ENCODE measurements at regions of chrX and their contacts with region 1.

Region 1: DNA sequence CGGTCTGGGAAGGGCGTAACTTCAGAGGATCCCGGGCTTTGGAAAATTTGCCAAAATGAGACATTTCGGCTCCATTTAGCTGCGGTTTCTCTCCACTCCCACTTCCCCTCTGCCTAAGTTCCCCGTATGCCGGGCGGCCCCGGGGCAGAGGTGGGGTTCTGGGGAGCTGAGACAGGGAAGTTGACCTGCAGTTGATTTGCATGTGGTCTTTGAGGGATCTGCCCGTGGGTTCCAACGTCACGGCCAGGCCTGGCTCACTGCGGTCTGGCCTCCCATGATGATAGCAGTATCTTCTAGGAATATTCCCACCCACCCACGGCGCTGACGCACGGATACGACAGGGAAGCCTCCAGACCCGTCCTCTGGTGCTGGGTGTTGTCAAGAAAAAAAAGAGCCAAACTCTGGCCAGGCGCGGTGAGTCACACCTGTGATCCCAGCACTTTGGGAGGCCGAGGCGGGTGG is 27.3 kb upstream of the CRLF2 start:
- DNase-seq: peak; percentile 68
- ATAC-seq: peak; percentile 88
- H3K4me3 ChIP-seq: no peak overlapping the region
- H3K27ac ChIP-seq: peak overlapping the region; percentile 7; the same call in 1 of the 2 replicates
- H3K4me1 ChIP-seq: peaks cover 8% of the 10 kb centered on the region; the same call in 1 of the 2 replicates
- H3K27me3 ChIP-seq: no peaks in the 10 kb centered on the region
- CTCF ChIP-seq: no peak
- EP300 ChIP-seq: peak; percentile 67 to 82; a peak in 2 of 4 replicates
- POLR2A ChIP-seq: no peak
- RAD21 ChIP-seq: no peak

Region 2: DNA sequence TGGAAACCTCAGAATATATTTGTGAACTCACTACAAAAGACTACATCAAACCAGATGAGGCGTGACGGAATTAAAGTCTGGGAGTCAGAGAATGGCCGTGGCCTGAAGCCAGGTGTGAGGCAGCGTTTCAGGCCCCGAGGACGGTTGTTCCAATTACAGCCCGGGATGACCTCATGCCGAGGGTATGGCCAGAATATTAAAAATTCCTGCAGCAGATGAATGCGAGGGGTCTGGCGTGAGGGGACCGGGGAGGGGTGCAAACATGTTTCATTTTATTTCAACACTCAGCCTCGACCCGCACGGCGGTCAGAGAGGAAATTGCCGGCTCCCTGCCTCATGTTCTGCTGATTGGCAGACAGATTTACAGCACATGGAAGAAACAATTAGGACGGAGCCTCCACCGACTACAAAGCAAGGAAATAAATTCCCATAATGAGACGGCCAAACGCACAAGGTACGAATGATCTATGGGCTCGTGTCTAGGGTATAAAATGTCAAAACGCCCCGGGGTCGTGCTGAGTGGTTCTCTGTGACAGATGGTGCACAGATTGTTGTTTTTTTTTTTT is 319.4 kb before region 1 on chrX:
- CTCF ChIA-PET with region 1: no interaction called
- POLR2A ChIA-PET with region 1: no interaction called
- RAD21 ChIA-PET with region 1: no interaction called
- SMC1A ChIA-PET with region 1: no interaction called
- in situ Hi-C with region 1: no loop called
- intact Hi-C with region 1: no loop called
- DNase-seq: no peak
- ATAC-seq: no peak
- H3K4me3 ChIP-seq: no peak overlapping the region
- H3K27ac ChIP-seq: no peak overlapping the region
- H3K4me1 ChIP-seq: no peaks in the 10 kb centered on the region
- H3K27me3 ChIP-seq: no peaks in the 10 kb centered on the region
- CTCF ChIP-seq: no peak
- EP300 ChIP-seq: no peak
- POLR2A ChIP-seq: no peak
- RAD21 ChIP-seq: no peak

Region 3: DNA sequence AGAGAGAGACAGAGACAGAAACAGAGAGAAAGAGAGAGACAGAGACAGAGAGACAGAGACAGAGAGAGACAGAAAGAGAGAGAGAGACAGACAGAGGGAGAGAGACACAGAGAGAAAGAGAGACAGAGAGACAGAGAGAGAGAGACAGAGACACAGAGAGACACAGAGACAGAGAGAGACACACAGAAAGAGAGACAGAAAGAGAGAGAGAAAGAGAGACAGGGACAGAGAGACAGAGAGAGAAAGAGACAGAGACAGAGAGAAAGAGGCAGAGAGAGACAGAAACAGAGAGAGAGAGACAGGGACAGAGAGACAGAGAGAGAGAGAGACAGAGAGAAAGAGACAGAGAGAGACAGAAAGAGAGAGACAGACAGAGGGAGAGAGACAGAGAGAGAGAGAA is 80.2 kb before region 1 on chrX:
- CTCF ChIA-PET with region 1: no interaction called
- POLR2A ChIA-PET with region 1: no interaction called
- RAD21 ChIA-PET with region 1: no interaction called
- SMC1A ChIA-PET with region 1: no interaction called
- in situ Hi-C with region 1: no loop called
- intact Hi-C with region 1: loop called (anchors 5 kb)
- DNase-seq: no peak
- ATAC-seq: no peak
- H3K4me3 ChIP-seq: no peak overlapping the region
- H3K27ac ChIP-seq: no peak overlapping the region
- H3K4me1 ChIP-seq: no peaks in the 10 kb centered on the region
- H3K27me3 ChIP-seq: no peaks in the 10 kb centered on the region
- CTCF ChIP-seq: no peak
- EP300 ChIP-seq: no peak
- POLR2A ChIP-seq: no peak
- RAD21 ChIP-seq: no peak

Measured in GM12878 (cell line).